ENCODE measurements at regions of chr3 and their contacts with region 1.

Region 1: DNA sequence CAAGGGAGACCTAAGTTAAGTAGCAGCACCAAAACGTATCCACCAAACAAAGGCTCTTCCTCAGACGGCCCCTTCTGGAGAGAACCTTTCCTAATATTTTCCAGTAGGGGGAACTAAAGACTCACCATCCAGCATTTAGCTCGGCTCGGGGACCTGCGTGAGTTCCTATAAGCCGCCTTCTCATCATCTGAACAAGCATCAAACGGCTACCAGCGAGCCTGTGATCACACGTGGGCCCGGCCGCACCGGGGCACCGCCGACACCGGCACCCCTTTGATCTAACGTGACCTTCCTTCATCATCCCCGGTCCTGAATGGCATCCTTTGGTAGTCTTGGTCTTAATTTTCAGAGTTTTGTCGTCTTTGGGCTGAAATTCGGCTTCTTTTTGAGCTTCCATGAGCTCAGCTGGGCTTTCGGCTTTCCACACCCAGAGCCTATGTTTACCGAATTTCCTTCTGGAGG is 1.4 kb upstream of the ROBO2 start:
- DNase-seq: peak; percentile 64
- H3K4me3 ChIP-seq: peak overlapping the region; percentile 23 to 33
- H3K27ac ChIP-seq: no peak overlapping the region
- H3K4me1 ChIP-seq: no peaks in the 10 kb centered on the region
- H3K27me3 ChIP-seq: no peaks in the 10 kb centered on the region
- CTCF ChIP-seq: peak in 3 of 4 experiments; percentile 55 to 73 (median 68)
- POLR2A ChIP-seq: no peak

Region 2: GRCh38 chr3:76976996-76977395 is 61.5 kb before region 1 on chr3:
- intact Hi-C with region 1: no loop called
- DNase-seq: no peak
- H3K4me3 ChIP-seq: no peak overlapping the region
- H3K27ac ChIP-seq: no peak overlapping the region
- H3K4me1 ChIP-seq: no peaks in the 10 kb centered on the region
- H3K27me3 ChIP-seq: no peaks in the 10 kb centered on the region
- CTCF ChIP-seq: no peak
- POLR2A ChIP-seq: no peak

Region 3: DNA sequence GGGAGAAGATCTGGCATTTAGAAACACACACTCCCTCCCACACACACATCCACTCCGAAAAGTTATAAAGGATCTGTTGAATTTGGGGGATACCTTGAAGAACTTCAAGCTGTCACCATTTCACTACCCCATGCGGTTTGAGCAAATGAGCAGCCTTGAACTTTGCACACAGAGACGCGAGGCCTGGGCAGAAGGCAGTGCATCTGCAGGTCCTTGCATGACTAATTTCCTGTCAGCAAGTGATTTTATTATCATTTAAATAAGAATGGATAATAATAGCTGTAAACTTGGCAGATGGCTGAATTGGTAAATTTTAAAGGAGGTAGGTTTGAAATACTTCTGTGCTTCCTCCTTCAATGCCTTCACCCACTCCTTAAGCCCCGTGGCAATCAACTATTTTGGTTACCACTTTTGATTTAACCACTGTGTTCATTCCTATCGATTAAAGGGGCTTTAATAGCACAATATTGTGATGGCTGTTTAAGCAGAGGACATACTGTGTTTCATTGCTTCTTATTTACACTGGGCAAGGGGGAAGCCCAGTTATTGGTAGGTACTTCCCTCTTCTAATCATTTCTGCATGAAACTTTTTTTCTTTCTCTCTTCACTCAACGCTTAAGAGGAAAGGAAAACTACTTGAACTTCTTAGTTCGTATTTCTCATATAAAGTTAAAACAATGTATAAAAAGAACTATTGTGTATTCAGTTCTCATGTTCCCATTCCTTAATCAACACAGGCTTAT is 109.5 kb after region 1 on chr3:
- intact Hi-C with region 1: no loop called
- DNase-seq: no peak
- H3K4me3 ChIP-seq: no peak overlapping the region
- H3K27ac ChIP-seq: no peak overlapping the region
- H3K4me1 ChIP-seq: no peaks in the 10 kb centered on the region
- H3K27me3 ChIP-seq: no peaks in the 10 kb centered on the region
- CTCF ChIP-seq: no peak
- POLR2A ChIP-seq: no peak

Region 4: DNA sequence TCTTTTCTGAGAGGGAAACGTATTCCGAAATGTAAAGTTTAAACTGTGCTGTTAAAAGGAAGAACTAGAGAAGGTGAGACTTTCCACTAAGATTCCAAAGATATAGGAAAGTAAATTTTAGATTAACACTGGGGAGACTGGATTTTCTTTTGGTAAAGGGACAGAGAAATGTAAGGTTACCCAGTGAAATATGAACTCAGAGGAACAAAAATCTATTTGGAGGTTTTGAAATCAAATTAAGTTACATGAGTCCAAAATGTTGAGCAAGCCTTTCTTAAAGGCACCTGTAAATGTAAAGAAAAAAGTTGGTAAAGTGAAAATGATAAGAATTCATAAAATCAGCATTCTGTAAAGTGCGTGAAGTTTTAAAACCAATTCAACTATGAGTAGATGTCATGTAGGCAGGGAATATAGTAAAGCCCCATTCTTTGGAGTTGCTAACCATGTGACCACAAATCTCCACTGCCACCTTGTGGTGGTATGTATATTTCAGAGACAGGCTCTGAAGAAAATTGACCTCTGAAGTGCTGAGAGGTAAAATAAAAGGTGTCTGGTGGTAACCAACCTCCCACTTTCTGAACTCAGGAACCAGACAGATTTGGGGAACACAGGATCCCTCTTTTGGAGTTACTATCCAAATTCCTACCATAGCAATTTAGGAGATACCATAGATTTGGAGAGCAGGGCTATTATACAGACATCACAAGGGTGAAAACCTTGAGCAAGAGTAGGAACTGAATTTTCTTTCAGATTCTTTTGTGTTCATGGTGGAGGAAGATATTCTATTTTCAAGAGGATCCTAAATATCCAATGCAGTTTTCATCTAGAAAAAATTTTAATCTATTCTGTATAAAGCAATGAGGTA is 216.7 kb after region 1 on chr3:
- intact Hi-C with region 1: loop called (anchors 2 kb)
- DNase-seq: peak; percentile 27
- H3K4me3 ChIP-seq: no peak overlapping the region
- H3K27ac ChIP-seq: no peak overlapping the region
- H3K4me1 ChIP-seq: no peaks in the 10 kb centered on the region
- H3K27me3 ChIP-seq: no peaks in the 10 kb centered on the region
- CTCF ChIP-seq: peak; percentile 42 to 68 (median 60)
- POLR2A ChIP-seq: no peak

Region 5: GRCh38 chr3:77342688-77343087 is 304.2 kb after region 1 on chr3:
- intact Hi-C with region 1: no loop called
- DNase-seq: no peak
- H3K4me3 ChIP-seq: no peak overlapping the region
- H3K27ac ChIP-seq: no peak overlapping the region
- H3K4me1 ChIP-seq: no peaks in the 10 kb centered on the region
- H3K27me3 ChIP-seq: no peaks in the 10 kb centered on the region
- CTCF ChIP-seq: no peak
- POLR2A ChIP-seq: no peak

Region 6: GRCh38 chr3:78645628-78646310 is 1607.3 kb after region 1 on chr3:
- intact Hi-C with region 1: loop called (anchors 10 kb)
- DNase-seq: peak; percentile 59
- H3K4me3 ChIP-seq: no peak overlapping the region
- H3K27ac ChIP-seq: no peak overlapping the region
- H3K4me1 ChIP-seq: no peaks in the 10 kb centered on the region
- H3K27me3 ChIP-seq: no peaks in the 10 kb centered on the region
- CTCF ChIP-seq: peak; percentile 31 to 90 (median 81)
- POLR2A ChIP-seq: no peak

Measured in prostate gland (tissue), 2 donors.